Activated CD4-positive, alpha-beta memory T cell treated with anti-CD3 and anti-CD28 coated beads for 36 hours (primary cell): ENCODE measurements at regions of chr7 and their contacts with region 1.

Region 1: DNA sequence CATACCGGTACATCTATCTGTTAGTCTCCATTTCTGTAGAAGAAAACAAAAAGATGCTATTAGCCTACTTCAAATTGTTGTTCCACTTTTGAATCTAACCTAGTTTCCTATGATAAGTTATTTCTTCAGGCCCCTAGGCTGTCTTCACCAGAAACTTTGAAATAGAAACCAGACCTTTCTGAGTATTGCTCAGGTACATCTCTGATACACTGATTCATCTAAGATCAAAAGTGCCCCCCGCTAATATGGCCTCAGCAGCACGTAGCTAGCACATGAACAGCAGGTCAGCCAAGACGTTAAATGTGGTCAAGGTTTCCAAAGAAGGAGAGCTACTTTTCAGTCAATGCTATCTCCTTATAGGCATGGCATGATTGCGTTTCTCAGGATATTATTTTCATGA is 23.6 kb downstream of the CTAGE6 start:
- DNase-seq: no peak
- H3K4me3 Mint-ChIP-seq: no peak overlapping the region
- H3K27ac Mint-ChIP-seq: no peak overlapping the region
- H3K4me1 Mint-ChIP-seq: peaks cover 27% of the 10 kb centered on the region
- H3K27me3 Mint-ChIP-seq: no peaks in the 10 kb centered on the region

Region 2: DNA sequence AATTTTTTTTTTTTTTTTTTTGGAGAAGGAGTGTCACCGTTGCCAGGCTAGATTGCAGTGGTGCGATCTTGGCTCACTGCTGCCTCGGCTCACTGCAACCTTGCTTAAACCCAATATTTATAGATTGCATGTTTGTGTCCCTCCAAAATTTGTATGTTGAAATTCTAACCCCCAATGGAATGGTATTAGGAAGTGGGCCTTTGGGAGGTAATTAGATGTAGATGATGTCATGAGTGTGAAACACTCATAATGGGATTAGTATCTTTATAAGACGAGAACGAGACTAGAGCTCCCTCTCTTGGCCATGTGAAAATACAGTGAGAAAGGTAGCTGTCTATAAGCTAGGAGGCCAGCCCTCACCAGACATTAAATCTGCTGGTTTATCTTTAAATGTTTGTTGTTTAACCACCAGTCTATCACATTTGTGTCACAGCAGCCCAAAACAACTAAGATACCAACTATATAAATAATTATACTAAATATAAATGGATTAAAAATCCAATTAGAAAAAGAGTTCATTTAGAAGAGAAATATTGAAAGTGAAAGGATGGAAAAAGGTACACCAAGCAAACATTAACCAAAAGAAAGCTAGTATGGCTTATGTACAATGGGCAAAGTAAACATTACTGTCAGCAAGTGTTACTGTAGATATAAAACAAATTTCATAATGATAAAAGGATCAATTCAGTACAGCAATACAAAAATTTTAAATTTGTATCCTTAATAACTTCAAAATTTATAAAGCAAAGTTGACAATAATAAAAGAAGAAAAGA is 158.8 kb after region 1 on chr7:
- CTCF ChIA-PET with region 1: no interaction called
- POLR2A ChIA-PET with region 1: no interaction called
- intact Hi-C with region 1: loop called (anchors 5 kb)
- DNase-seq: no peak
- H3K4me3 Mint-ChIP-seq: no peak overlapping the region
- H3K27ac Mint-ChIP-seq: no peak overlapping the region
- H3K4me1 Mint-ChIP-seq: peaks cover 6% of the 10 kb centered on the region
- H3K27me3 Mint-ChIP-seq: peaks cover 4% of the 10 kb centered on the region

Region 3: DNA sequence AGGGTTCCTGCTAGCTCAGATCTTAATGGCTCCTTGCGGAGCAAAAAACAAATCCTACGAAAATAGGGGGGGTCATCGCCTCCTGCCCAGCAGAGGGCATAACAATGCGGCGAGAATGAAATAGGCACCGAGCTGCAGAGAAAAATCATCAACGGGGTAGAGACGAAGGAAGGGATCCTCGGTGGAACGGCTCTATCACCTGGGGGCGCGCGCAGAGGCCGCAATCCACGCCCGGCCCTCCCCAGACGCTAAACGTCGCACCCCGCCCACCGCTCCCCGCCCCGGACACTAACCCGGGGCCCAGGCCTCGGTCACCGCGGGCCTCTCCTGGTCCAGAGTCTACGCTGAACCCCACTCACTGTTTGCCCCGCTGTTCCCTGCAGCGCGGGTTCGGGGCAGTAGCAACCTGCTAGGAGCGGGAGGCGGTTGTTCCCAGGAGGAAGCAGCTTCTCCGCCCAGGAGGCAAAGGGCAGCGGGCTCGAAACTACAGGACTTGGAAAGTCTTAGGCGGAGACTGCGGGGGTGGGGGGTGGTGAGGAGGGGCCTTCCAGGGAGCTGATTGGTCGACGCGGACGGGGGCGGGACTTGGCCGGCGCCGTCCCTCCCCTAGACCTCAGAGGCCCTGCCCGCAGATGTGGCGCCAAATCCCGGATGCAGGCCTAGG is 167.9 kb after region 1 on chr7 and contains the start of gene TCAF1:
- CTCF ChIA-PET with region 1: no interaction called
- POLR2A ChIA-PET with region 1: no interaction called
- intact Hi-C with region 1: loop called (anchors 5 kb)
- DNase-seq: peak; percentile 95
- H3K4me3 Mint-ChIP-seq: peak within 1 kb of the TSS; percentile 86
- H3K27ac Mint-ChIP-seq: peak within 1 kb of the TSS; percentile 80
- H3K4me1 Mint-ChIP-seq: peaks cover 25% of the 10 kb centered on the region
- H3K27me3 Mint-ChIP-seq: no peaks in the 10 kb centered on the region
- total RNA-seq, gene TCAF1: 25.8 to 26.1 TPM